Activated CD4-positive, alpha-beta T cell treated with anti-CD3 and anti-CD28 coated beads for 36 hours (primary cell): ENCODE measurements at regions of chr3 and their contacts with region 1.

Region 1: DNA sequence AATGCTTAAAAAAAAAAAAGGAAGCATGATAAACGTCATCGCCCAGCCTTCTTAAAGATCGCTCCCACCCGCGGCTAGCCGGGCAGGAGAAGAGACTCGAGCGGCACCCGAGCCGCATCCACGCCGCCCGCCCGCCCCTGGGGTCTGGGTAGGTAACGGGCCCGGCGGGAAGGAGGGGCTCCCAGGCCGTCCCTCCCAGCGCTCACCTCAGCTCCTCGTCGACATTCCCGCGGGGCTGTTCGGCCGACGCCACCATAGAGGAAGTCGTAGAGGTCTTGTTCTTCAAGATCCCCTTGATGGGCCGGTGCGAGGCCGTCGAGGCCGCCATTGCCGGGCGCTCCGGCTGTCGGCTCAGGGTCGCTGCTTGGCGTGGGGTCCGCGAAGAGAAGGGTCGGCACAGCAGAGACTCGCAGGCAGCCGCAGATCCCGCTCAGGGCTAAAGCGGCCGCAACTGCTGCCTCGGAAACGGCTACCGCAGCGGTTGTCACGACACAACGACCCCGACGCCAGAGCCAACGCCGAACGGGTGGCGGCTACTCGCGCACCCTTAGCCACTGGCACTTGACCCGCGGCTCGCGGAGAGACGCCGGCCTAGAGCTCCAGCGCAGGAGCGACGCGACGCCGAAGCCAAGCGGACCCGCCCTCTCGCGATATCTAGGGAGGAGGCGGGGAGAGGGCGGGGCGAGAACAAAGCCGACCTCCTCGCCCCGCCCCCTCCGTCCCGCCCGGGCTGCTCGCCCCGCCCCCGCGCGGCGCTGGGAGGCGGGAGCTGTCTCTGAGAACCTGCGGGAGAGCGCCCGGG is at the start of gene PPP1R2:
- DNase-seq: peak; percentile 97
- ATAC-seq: peak; percentile 72
- H3K4me3 Mint-ChIP-seq: peak within 1 kb of the TSS; percentile 95
- H3K27ac Mint-ChIP-seq: peak within 1 kb of the TSS; percentile 95
- H3K4me1 Mint-ChIP-seq: peaks cover 65% of the 10 kb centered on the region
- H3K27me3 Mint-ChIP-seq: no peaks in the 10 kb centered on the region
- total RNA-seq, gene PPP1R2: 77.0 to 134 TPM

Region 2: DNA sequence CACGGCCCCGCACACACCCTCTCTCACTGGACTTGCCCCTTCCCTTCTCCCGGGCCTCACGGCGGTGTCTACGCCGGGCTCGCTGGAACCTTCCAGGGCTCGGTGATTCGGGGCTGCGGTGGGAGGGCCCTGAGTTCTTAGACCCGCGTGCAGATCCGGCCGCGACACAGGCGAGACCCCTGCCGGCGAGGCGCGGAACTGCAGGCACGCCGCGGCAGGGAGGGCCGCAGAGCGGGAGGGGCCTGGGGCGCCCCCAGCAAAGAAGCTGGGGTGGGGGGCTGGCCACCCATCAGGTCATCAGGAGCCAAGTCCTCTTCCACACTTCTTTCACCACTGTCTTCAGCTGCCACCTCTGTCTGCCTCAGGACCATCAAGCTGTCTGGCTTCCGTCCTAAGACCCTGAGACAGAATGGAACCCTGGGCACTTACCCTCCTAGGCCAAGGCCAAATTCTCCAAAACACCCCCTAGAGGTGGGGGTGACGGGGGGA is 436.4 kb before region 1 on chr3:
- CTCF ChIA-PET with region 1: no interaction called
- POLR2A ChIA-PET with region 1: no interaction called
- intact Hi-C with region 1: no loop called
- DNase-seq: peak; percentile 80
- ATAC-seq: peak; percentile 85
- H3K4me3 Mint-ChIP-seq: peak overlapping the region; percentile 9
- H3K27ac Mint-ChIP-seq: peak overlapping the region; percentile 55
- H3K4me1 Mint-ChIP-seq: peaks cover 4% of the 10 kb centered on the region
- H3K27me3 Mint-ChIP-seq: no peaks in the 10 kb centered on the region

Region 3: GRCh38 chr3:195407531-195408409 is 135.1 kb before region 1 on chr3:
- CTCF ChIA-PET with region 1: no interaction called
- POLR2A ChIA-PET with region 1: interaction called, 4 read pairs
- intact Hi-C with region 1: loop called in 1 of 2 experiments (anchors 5 kb)
- DNase-seq: peak; percentile 30
- ATAC-seq: peak; percentile 77
- H3K4me3 Mint-ChIP-seq: peak overlapping the region; percentile 33
- H3K27ac Mint-ChIP-seq: peak overlapping the region; percentile 70
- H3K4me1 Mint-ChIP-seq: peaks cover 50% of the 10 kb centered on the region
- H3K27me3 Mint-ChIP-seq: no peaks in the 10 kb centered on the region

Region 4: GRCh38 chr3:195442573-195443390 is 100.1 kb before region 1 on chr3 and contains the start of gene ACAP2:
- CTCF ChIA-PET with region 1: no interaction called
- POLR2A ChIA-PET with region 1: interaction called, 5 read pairs
- intact Hi-C with region 1: loop called (anchors 1 to 2 kb)
- DNase-seq: peak; percentile 99
- ATAC-seq: peak; percentile 96
- H3K4me3 Mint-ChIP-seq: peak within 1 kb of the TSS; percentile 96
- H3K27ac Mint-ChIP-seq: peak within 1 kb of the TSS; percentile 91
- H3K4me1 Mint-ChIP-seq: peaks cover 44% of the 10 kb centered on the region
- H3K27me3 Mint-ChIP-seq: no peaks in the 10 kb centered on the region
- total RNA-seq, gene ACAP2: 43.7 to 51.9 TPM

Region 5: DNA sequence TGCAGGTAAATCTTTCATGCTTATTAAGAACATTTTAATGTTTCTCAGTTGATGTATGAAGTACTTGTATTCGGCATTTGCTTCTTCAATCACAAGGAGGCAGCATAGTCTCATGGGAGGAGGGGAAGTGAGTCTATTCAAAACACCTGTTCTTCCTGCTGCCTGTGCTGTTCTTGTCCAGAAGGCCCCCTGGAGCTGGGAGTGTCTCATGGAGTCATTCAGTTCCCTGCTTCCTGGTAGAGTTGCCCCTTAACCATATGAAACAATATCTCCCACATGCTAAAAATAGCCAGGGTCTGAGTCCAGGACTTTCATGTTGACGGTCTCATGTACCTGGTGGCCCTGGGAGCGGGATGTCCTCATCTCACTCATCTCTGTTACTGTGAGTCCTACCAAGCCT is 15.7 kb after region 1 on chr3:
- CTCF ChIA-PET with region 1: interaction called, 20 read pairs
- POLR2A ChIA-PET with region 1: no interaction called
- intact Hi-C with region 1: no loop called
- DNase-seq: peak; percentile 39
- ATAC-seq: peak; percentile 65
- H3K4me3 Mint-ChIP-seq: no peak overlapping the region
- H3K27ac Mint-ChIP-seq: no peak overlapping the region
- H3K4me1 Mint-ChIP-seq: peaks cover 37% of the 10 kb centered on the region
- H3K27me3 Mint-ChIP-seq: no peaks in the 10 kb centered on the region